AG04449 (cell line): ENCODE measurements at regions of chr11 and their contacts with region 1.

Region 1: DNA sequence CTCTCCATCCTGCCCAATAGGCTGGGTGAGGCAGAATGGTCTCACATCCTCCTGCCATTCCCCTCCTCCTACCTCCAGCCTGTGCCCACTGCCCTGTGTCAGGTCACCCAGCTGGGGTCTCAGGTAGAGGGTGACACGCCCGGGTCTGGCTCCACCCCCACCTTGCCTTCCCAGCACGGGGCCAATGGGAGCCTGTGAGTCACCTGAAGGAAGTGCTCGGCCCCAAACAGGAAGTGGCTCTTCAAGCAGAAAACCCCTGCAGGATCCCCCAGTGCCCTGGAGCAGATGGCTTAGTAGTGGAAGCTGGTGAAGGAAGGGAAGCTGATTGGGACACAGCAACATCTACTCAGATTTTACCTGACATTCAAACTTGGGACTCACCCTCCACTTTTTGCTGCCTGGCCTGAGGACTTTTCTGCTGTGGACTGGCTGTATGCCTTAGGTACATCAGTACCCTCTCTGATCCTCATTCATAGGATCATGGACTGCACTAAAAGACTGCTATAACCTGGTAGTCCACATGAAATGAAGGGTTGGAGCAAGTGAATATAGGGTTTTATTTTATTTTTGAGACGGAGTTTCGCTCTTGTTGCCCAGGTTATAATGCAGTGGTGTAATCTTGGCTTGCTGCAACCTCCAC is 33.4 kb downstream of the GDPD5 start:
- DNase-seq: no peak
- H3K4me3 ChIP-seq: no peak overlapping the region
- CTCF ChIP-seq: no peak

Region 2: DNA sequence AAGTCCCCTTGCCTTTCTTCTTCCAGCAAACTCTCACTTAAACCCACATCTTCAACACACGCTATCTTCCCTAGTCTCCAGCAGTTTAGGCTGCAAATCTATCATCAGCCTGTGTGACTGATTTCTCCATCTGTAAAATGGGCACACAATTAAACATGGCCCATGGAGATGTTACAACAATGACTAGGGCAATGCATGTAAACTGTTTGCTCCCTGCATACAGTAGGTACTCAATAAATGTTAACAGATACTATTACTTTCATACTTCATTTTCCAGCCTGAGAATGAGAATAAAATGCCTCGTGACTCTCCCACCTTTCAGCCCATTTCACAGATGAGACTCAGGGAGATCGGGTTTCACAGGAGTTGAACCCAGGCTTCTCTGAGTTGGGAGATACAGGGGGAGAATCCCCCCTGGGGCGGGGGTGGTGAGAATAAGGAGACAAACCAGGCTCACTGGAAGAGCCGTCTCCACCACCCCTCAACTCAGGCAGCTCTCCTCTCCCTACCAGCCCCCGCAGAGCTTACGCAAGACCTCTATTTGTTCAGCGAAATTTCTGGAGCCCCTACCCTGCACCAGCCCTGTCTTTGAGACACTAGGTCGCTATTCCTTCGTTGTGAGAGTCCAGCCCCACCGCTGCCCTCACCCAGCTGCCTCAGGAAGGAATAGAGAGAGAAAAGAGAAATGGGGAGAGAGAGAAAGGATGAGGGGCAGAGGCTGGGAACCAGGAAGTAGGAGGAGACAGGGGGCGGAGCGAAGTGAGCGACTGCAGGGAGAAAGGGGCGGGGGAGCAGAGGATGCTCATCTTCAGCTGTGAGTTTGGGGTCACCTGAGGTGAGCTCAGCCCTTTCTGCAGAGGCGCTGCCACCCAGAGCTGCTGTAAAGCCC is 17.2 kb before region 1 on chr11:
- CTCF ChIA-PET with region 1: interaction called, 17 read pairs
- POLR2A ChIA-PET with region 1: interaction called, 6 read pairs
- DNase-seq: no peak
- H3K4me3 ChIP-seq: peak overlapping the region; percentile 18; the same call in 1 of the 2 replicates
- CTCF ChIP-seq: no peak